ENCODE measurements at regions of chr4 and their contacts with region 1.

Region 1: DNA sequence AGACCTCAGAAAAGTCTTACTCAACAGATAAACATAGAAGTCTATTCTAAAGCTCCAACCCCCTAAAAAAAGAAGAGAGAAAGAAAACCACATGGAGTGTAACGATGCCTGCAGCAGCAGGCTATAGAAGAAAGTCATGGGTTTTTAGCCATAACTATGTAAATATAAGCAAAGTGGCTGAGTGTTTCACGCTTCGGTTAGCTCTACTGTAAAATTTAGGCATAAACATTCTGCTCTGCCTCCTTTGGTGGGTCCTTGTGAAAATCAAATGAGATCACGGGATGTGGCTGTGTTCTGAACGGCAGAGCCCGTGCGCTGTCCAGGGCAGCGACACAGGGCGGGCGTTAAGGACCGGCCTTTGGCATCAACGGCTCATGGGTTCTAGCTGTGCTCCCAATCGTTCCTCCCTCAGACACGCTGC is 78.4 kb downstream of the IRF2 start:
- DNase-seq: no peak
- ATAC-seq: peak in 1 of 2 donors; percentile 12
- H3K4me3 ChIP-seq: no peak overlapping the region
- H3K27ac ChIP-seq: peak overlapping the region; percentile 71 to 86 (median 82)
- H3K4me1 ChIP-seq: peaks cover 46 to 55% of the 10 kb centered on the region in 2 donors
- H3K27me3 ChIP-seq: no peaks in the 10 kb centered on the region
- CTCF ChIP-seq: no peak
- POLR2A ChIP-seq: no peak

Region 2: GRCh38 chr4:184263910-184264732 is 131.9 kb before region 1 on chr4:
- in situ Hi-C with region 1: no loop called
- intact Hi-C with region 1: loop called (anchors 5 kb)
- DNase-seq: peak; percentile 79 to 86
- ATAC-seq: peak; percentile 85 to 92
- H3K4me3 ChIP-seq: no peak overlapping the region
- H3K27ac ChIP-seq: no peak overlapping the region
- H3K4me1 ChIP-seq: no peaks in the 10 kb centered on the region
- H3K27me3 ChIP-seq: no peaks in the 10 kb centered on the region
- CTCF ChIP-seq: peak; percentile 81 to 94 (median 90)
- POLR2A ChIP-seq: no peak

Region 3: GRCh38 chr4:184287697-184288255 is 108.2 kb before region 1 on chr4:
- in situ Hi-C with region 1: no loop called
- intact Hi-C with region 1: loop called (anchors 5 kb)
- DNase-seq: no peak
- ATAC-seq: peak; percentile 91 to 93
- H3K4me3 ChIP-seq: no peak overlapping the region
- H3K27ac ChIP-seq: peak overlapping the region in 2 of 4 donors; percentile 25
- H3K4me1 ChIP-seq: peaks cover 2 to 8% of the 10 kb centered on the region in 2 donors
- H3K27me3 ChIP-seq: no peaks in the 10 kb centered on the region
- CTCF ChIP-seq: peak; percentile 36 to 46 (median 44)
- POLR2A ChIP-seq: no peak

Region 4: DNA sequence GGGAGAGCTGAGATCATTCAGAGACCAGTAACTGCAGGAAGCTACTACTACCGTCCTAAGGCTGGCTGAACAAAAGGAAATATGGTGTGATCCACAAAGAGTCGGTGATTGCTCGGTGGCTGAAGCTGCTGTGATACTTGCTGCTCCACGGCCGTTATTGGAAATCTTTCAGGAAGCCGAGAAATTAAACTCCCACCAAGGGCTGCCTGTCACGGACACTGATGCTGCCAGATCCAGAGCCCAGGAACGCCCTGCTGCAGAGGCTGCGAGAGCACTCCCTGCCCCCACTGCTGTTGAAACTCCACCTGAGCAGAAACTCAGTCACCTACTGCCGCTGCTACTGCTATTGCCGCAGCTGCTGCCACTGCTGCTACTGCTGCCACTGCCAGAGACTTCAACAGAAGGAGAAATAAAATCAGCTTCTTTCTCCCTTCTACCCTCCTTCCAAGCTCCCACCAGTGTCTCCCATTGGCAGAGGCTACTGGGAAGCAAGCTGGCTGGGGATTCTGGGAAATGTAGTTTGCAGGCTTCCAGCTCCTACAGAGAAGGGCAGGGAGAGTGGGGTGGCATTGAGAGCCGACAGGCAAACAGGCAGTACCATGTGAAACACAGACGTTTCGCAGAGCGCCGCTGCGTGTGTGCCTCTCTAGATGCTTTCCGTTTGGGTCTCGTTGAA is 52.3 kb before region 1 on chr4:
- in situ Hi-C with region 1: no loop called
- intact Hi-C with region 1: loop called (anchors 5 kb)
- DNase-seq: peak; percentile 77 to 84
- ATAC-seq: peak; percentile 64 to 69
- H3K4me3 ChIP-seq: peak overlapping the region; percentile 56 to 82 (median 67)
- H3K27ac ChIP-seq: peak overlapping the region; percentile 91 to 97 (median 92)
- H3K4me1 ChIP-seq: peaks cover 51 to 54% of the 10 kb centered on the region in 2 donors
- H3K27me3 ChIP-seq: no peaks in the 10 kb centered on the region
- CTCF ChIP-seq: no peak
- POLR2A ChIP-seq: peak; percentile 50 to 69

Measured in gastrocnemius medialis (tissue), 4 donors.